Calu3 (cell line): ENCODE measurements at regions of chr17 and their contacts with region 1.

Region 1: GRCh38 chr17:44864866-44865660 is 17.4 kb downstream of the HIGD1B start:
- DNase-seq: peak; percentile 87
- H3K4me3 Mint-ChIP-seq: no peak overlapping the region
- H3K27ac Mint-ChIP-seq: no peak overlapping the region
- H3K4me1 Mint-ChIP-seq: no peaks in the 10 kb centered on the region
- H3K27me3 Mint-ChIP-seq: no peaks in the 10 kb centered on the region
- CTCF ChIP-seq: peak; percentile 91

Region 2: DNA sequence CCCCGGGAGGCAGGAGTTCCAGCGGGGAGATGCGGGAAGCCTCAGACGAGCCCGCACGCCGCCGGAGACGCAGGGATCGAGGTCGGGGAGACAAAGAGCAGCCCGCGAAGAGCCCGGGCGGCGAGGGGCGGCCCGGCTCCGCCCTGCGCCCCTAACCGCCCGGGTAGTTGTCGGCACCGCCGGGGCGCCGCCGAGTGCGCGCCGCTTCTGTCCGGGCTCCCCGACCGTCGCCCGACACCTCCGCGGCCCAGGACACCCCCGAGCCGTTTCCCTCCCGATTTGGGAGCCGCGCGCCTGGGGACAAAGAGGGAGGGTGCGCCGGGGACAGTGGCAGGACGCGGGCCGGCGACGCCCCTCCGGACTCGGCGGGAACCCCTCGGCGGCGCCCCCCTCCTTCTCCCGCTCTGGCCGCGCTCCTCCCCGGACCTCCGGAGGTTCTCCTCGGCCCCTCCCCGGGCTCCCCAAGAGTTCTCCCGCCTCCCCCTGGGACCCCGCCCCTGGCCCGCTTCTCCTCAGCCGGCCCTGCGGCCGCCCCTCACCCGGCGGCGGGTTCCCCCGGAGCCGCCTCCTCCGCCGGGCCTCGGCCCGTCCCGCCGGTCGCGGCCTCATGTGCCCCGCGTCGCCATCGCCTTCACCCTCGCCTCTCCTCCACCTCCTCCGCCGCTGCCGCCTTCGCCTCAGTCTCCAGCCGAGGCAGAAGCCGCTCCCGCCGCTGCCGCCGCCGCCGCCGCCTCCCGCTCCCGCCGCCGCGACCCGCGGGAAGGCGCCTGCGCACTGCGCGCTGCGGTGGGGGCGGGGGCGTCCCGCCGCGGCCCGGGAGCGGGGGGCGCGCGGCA is 35.3 kb before region 1 on chr17 and contains the start of gene GJC1:
- CTCF ChIA-PET with region 1: interaction called, 4 read pairs
- intact Hi-C with region 1: loop called (anchors 5 kb)
- DNase-seq: peak; percentile 74
- H3K4me3 Mint-ChIP-seq: peak within 1 kb of the TSS; percentile 99
- H3K27ac Mint-ChIP-seq: peak within 1 kb of the TSS; percentile 96
- H3K4me1 Mint-ChIP-seq: peaks cover 13% of the 10 kb centered on the region
- H3K27me3 Mint-ChIP-seq: no peaks in the 10 kb centered on the region
- CTCF ChIP-seq: no peak
- total RNA-seq, gene GJC1: 75.9 and 114 TPM in 2 replicates